Activated CD8-positive, alpha-beta T cell treated with anti-CD3 and anti-CD28 coated beads for 36 hours (primary cell): ENCODE measurements at regions of chr15 and their contacts with region 1.

Region 1: DNA sequence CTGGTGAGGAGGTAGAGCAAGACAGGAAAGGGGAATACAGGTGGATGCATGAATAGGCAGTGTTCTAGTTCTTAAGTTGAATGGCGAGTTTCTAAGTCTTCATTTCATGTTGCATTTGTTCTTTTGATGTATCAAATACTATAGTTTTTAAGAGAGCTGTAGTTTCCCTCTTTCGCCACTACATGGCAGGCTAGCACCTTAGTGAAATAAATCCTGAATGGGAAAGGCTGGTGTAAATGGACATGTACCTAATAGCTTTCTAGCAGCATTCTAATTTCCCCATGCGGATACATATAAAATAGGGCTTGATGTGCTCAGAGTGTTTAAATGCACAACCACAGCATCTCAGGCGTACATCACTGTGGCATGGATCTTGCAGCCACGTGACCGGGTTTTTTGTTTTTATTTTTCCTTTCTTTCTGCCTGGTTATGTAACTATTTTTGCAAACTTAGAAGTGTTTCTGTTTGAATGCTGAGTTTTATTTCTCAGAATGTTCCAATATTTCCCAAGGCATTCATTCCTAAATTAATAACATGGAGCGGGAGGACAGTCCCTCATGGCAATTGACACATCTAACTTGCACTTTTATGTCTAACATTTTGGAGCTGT is 23.5 kb upstream of the CLN6 start:
- DNase-seq: peak; percentile 66
- ATAC-seq: peak; percentile 77
- H3K4me3 Mint-ChIP-seq: no peak overlapping the region
- H3K27ac Mint-ChIP-seq: no peak overlapping the region
- H3K4me1 Mint-ChIP-seq: no peaks in the 10 kb centered on the region
- H3K27me3 Mint-ChIP-seq: peaks cover 3% of the 10 kb centered on the region
- CTCF ChIP-seq: peak; percentile 82

Region 2: DNA sequence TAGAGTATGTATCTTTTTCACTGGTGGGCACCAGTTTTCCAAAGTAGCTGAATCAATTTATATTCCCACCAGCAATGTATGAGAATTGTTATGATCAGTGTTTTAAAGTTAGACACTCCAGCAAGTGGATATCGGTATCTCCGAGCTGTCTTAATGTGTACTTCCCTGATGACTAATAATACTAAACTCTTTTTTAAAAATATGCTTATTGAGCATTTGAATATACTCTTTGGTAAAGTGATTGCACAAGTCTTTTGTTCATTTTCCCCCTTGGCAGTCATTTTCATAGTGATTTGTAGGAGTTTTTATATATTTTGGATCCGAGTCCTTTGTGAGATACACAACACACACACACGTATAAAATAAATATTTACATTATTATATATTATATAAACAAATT is 12.1 kb after region 1 on chr15:
- CTCF ChIA-PET with region 1: interaction called, 19 read pairs
- POLR2A ChIA-PET with region 1: no interaction called
- intact Hi-C with region 1: no loop called
- DNase-seq: no peak
- ATAC-seq: no peak
- H3K4me3 Mint-ChIP-seq: no peak overlapping the region
- H3K27ac Mint-ChIP-seq: no peak overlapping the region
- H3K4me1 Mint-ChIP-seq: no peaks in the 10 kb centered on the region
- H3K27me3 Mint-ChIP-seq: peaks cover 12% of the 10 kb centered on the region
- CTCF ChIP-seq: no peak

Region 3: GRCh38 chr15:68292157-68292781 is 39.2 kb after region 1 on chr15:
- CTCF ChIA-PET with region 1: interaction called, 13 read pairs
- POLR2A ChIA-PET with region 1: interaction called, 3 read pairs
- intact Hi-C with region 1: loop called (anchors 5 kb)
- DNase-seq: no peak
- ATAC-seq: peak; percentile 56
- H3K4me3 Mint-ChIP-seq: no peak overlapping the region
- H3K27ac Mint-ChIP-seq: peak overlapping the region; percentile 67
- H3K4me1 Mint-ChIP-seq: peaks cover 62% of the 10 kb centered on the region
- H3K27me3 Mint-ChIP-seq: no peaks in the 10 kb centered on the region
- CTCF ChIP-seq: no peak

Region 4: DNA sequence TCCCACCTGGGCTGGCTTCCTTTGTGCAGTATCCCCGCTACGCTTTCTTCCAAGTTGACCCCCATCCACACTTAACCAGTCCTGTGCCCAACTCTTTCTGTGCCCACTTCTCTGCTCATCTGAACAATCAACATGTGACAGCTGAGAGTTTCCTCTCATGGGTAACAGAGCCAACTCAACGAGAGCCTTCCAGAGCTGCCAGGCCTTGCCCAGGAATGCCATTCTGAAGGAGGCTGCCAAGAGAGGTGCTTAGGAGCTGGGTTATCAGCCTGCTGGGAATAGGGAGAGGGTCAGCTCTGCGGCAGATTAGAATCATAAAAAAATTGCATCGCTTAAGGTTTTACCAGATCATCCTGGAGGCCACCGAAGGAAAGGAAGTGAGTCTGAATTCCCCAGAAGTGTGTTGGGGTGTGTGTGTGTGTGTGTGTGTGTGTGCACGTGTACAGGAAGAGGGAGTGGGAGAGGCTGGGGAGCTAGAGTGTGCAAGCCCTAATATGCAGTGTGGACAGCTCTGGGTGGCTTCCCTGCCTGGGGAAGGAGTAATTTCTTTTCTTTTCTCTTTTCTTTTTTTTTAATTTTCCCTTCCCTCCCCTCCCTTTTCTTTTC is 112.2 kb after region 1 on chr15:
- CTCF ChIA-PET with region 1: interaction called, 4 read pairs
- POLR2A ChIA-PET with region 1: no interaction called
- intact Hi-C with region 1: loop called (anchors 5 kb)
- DNase-seq: peak; percentile 31
- ATAC-seq: peak; percentile 65
- H3K4me3 Mint-ChIP-seq: peak overlapping the region; percentile 60
- H3K27ac Mint-ChIP-seq: peak overlapping the region; percentile 64
- H3K4me1 Mint-ChIP-seq: peaks cover 9% of the 10 kb centered on the region
- H3K27me3 Mint-ChIP-seq: peaks cover 4% of the 10 kb centered on the region
- CTCF ChIP-seq: no peak